ENCODE measurements at regions of chr12 and their contacts with region 1.

Region 1: GRCh38 chr12:110403146-110403975 is at the start of gene ANAPC7:
- DNase-seq: peak; percentile 73 to 94 (median 84)
- ATAC-seq: peak; percentile 94
- H3K4me3 ChIP-seq: peak within 1 kb of the TSS; percentile 79
- H3K4me3 Mint-ChIP-seq: peak within 1 kb of the TSS; percentile 99
- H3K27ac ChIP-seq: peak within 1 kb of the TSS; percentile 86 to 91
- H3K27ac Mint-ChIP-seq: peak within 1 kb of the TSS; percentile 98
- H3K4me1 ChIP-seq: peaks cover 26% of the 10 kb centered on the region
- H3K4me1 Mint-ChIP-seq: peaks cover 41% of the 10 kb centered on the region
- H3K27me3 ChIP-seq: no peaks in the 10 kb centered on the region
- H3K27me3 Mint-ChIP-seq: no peaks in the 10 kb centered on the region
- CTCF ChIP-seq: no peak
- total RNA-seq, gene ANAPC7: 16.4 to 18.2 TPM

Region 2: GRCh38 chr12:109899783-109900751 is 503.3 kb before region 1 on chr12 and contains the start of gene TCHP:
- CTCF ChIA-PET with region 1: no interaction called
- POLR2A ChIA-PET with region 1: no interaction called
- intact Hi-C with region 1: no loop called
- DNase-seq: peak; percentile 59 to 90 (median 69)
- ATAC-seq: peak; percentile 93
- H3K4me3 ChIP-seq: peak within 1 kb of the TSS; percentile 72
- H3K4me3 Mint-ChIP-seq: peak within 1 kb of the TSS; percentile 89
- H3K27ac ChIP-seq: peak within 1 kb of the TSS; percentile 55 to 64
- H3K27ac Mint-ChIP-seq: peak within 1 kb of the TSS; percentile 86
- H3K4me1 ChIP-seq: peaks cover 28% of the 10 kb centered on the region
- H3K4me1 Mint-ChIP-seq: peaks cover 25% of the 10 kb centered on the region
- H3K27me3 ChIP-seq: no peaks in the 10 kb centered on the region
- H3K27me3 Mint-ChIP-seq: no peaks in the 10 kb centered on the region
- CTCF ChIP-seq: no peak
- total RNA-seq, gene TCHP: 13.2 to 13.6 TPM

Region 3: GRCh38 chr12:110355073-110355472 is 48.3 kb before region 1 on chr12:
- CTCF ChIA-PET with region 1: no interaction called
- POLR2A ChIA-PET with region 1: interaction called, 3 read pairs
- intact Hi-C with region 1: loop called in 1 of 2 experiments (anchors 10 kb)
- DNase-seq: peak in 6 of 14 experiments; percentile 12 to 61 (median 38)
- ATAC-seq: peak; percentile 70
- H3K4me3 ChIP-seq: no peak overlapping the region
- H3K4me3 Mint-ChIP-seq: no peak overlapping the region
- H3K27ac ChIP-seq: no peak overlapping the region
- H3K27ac Mint-ChIP-seq: no peak overlapping the region
- H3K4me1 ChIP-seq: no peaks in the 10 kb centered on the region
- H3K4me1 Mint-ChIP-seq: peaks cover 23% of the 10 kb centered on the region
- H3K27me3 ChIP-seq: no peaks in the 10 kb centered on the region
- H3K27me3 Mint-ChIP-seq: no peaks in the 10 kb centered on the region
- CTCF ChIP-seq: peak; percentile 29

Measured in CD4-positive, alpha-beta T cell (primary cell).